ENCODE measurements at regions of chr4 and their contacts with region 1.

Region 1: DNA sequence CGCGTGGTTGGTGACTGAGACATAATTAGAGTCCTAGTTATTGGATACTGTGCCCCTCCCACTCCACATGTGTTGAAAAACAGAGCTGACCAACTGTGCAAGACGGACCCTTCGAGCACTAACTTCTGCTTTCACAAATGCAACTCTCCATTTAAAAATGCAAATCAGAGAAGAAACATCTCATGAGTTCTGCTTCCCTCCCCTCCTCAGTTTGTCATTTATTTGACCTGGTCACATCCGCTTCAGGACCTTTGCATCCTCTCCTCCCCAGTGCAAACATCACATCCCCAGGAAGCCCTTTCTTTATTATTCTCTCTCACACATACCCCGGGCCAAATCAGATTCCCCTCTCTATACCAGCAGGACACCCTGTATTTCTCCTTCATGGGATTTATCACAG is 38.1 kb upstream of the NOCT start:
- DNase-seq: peak; percentile 74
- ATAC-seq: peak; percentile 95
- H3K4me3 ChIP-seq: peak overlapping the region in 2 of 5 experiments; percentile 4 to 19
- H3K4me3 Mint-ChIP-seq: peak overlapping the region; percentile 72
- H3K27ac ChIP-seq: peak overlapping the region; percentile 58 to 80
- H3K27ac Mint-ChIP-seq: peak overlapping the region; percentile 89
- H3K4me1 ChIP-seq: peaks cover 22 to 24% of the 10 kb centered on the region in 2 donors
- H3K4me1 Mint-ChIP-seq: peaks cover 24% of the 10 kb centered on the region
- H3K27me3 ChIP-seq: no peaks in the 10 kb centered on the region
- H3K27me3 Mint-ChIP-seq: no peaks in the 10 kb centered on the region
- CTCF ChIP-seq: no peak

Region 2: DNA sequence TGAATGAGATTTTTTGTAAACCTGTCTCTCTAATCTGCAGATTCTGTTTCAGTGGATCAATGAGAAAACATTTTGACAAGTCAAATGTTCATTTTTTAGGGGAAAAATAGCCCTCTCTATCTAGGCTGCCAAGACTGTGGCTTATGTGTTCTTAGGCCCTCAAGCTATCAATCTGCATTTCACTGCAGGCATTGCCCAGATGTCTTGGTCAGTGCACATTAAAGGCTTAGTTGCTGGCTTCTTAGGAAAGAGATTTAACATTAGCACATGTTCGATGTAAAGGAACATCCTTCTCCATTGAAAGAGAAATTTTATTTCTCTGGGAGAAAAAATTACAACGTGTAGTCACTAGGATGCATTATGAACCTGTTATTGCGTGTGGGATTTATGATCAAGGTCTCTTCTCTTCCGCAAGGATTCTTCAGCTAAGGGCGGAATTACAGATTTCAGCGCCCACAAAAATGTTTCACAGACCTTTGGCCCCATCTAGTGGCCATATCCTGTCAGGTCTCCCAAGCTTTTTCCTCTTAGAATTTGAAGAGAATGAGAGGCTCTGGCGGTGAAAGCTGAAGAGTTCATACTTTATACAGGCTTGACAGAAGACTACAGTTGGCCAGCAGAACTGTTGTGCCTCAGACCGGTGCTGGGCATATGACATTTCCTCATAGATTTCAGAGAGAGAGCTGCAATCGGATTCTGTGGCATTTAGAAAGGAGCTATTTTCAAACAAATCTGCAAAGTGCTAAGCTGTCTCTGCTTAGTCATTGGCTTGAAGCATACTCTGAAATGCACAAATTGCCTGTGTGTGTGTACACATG is 106.6 kb before region 1 on chr4:
- CTCF ChIA-PET with region 1: no interaction called
- POLR2A ChIA-PET with region 1: no interaction called
- intact Hi-C with region 1: no loop called
- DNase-seq: peak; percentile 59
- ATAC-seq: peak; percentile 39
- H3K4me3 ChIP-seq: no peak overlapping the region
- H3K4me3 Mint-ChIP-seq: no peak overlapping the region
- H3K27ac ChIP-seq: no peak overlapping the region
- H3K27ac Mint-ChIP-seq: no peak overlapping the region
- H3K4me1 ChIP-seq: peaks cover 0 to 6% of the 10 kb centered on the region in 2 donors
- H3K4me1 Mint-ChIP-seq: no peaks in the 10 kb centered on the region
- H3K27me3 ChIP-seq: peaks cover 0 to 12% (median 3%) of the 10 kb centered on the region in 4 experiments
- H3K27me3 Mint-ChIP-seq: peaks cover 21% of the 10 kb centered on the region
- CTCF ChIP-seq: peak; percentile 89

Region 3: GRCh38 chr4:139015269-139015947 is 37.9 kb after region 1 on chr4 and contains the start of gene NOCT:
- CTCF ChIA-PET with region 1: interaction called, 5 read pairs
- POLR2A ChIA-PET with region 1: interaction called, 4 read pairs
- intact Hi-C with region 1: loop called (anchors 2 kb)
- DNase-seq: peak; percentile 97
- ATAC-seq: peak; percentile 92
- H3K4me3 ChIP-seq: peak within 1 kb of the TSS; percentile 56 to 86 (median 78)
- H3K4me3 Mint-ChIP-seq: peak within 1 kb of the TSS; percentile 92
- H3K27ac ChIP-seq: peak within 1 kb of the TSS; percentile 88 to 98
- H3K27ac Mint-ChIP-seq: peak within 1 kb of the TSS; percentile 98
- H3K4me1 ChIP-seq: peaks cover 14 to 18% of the 10 kb centered on the region in 2 donors
- H3K4me1 Mint-ChIP-seq: peaks cover 28% of the 10 kb centered on the region
- H3K27me3 ChIP-seq: no peaks in the 10 kb centered on the region
- H3K27me3 Mint-ChIP-seq: no peaks in the 10 kb centered on the region
- CTCF ChIP-seq: no peak
- total RNA-seq, gene NOCT: 2.6 and 3.0 TPM in 2 replicates

Measured in B cell (primary cell).